T-cell (primary cell): ENCODE measurements at regions of chr3 and their contacts with region 1.

Region 1: GRCh38 chr3:71142440-71143161 is 440.9 kb downstream of the FOXP1 start:
- DNase-seq: peak in 2 of 35 experiments; percentile 15 to 25
- ATAC-seq: peak in 2 of 4 experiments; percentile 49 to 61
- H3K4me3 ChIP-seq: no peak overlapping the region
- H3K4me3 Mint-ChIP-seq: no peak overlapping the region
- H3K27ac ChIP-seq: peak overlapping the region; percentile 7
- H3K27ac Mint-ChIP-seq: peak overlapping the region; percentile 36 to 84
- H3K4me1 ChIP-seq: peaks cover 0 to 4% of the 10 kb centered on the region in 2 experiments
- H3K4me1 Mint-ChIP-seq: peaks cover 62 to 75% (median 71%) of the 10 kb centered on the region in 3 donors
- H3K27me3 ChIP-seq: no peaks in the 10 kb centered on the region
- H3K27me3 Mint-ChIP-seq: no peaks in the 10 kb centered on the region

Region 2: DNA sequence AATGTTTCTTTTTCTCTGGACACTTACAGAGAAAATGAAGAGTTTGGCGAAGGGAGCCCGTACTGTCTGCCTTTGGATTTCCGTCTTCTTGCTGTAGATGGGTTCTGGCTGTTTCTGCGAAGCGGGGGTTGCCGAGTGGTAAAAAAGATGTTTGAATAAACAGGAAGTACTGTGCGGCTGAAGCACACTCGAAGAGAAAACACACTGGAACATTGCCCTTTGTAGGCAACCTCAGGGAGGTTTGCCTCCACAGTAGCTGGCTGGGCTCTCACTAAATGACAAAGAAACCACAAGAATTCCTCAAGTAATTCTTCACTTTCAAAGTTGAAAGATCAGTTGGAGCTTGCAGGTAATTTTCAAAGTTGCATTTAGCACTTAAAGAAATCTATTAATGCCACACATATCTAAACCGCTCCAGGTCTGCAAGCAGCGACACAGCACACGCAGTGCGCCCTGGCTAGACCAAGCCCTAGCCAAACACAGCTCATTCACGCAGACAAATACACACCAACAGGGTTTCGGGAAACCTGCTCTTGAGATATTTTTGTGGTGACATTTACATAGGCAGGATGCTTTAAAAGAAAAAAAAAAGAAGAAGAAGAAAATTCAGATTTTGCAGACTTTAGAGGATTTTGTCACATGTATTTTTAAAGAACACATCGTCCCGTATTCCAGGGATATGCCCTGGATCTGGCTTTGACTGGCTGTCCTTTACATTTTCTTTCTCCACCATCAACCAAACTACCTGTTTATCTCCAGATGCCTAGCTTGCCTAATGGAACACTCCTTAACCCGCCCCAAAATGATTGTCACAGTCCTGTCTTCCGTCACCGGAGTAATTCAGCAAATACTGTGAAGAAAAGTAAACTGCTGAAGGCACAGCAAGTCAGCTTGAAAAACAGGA is 11.9 kb before region 1 on chr3:
- CTCF ChIA-PET with region 1: interaction called in 1 of 2 experiments, 10 read pairs
- POLR2A ChIA-PET with region 1: interaction called in 1 of 2 experiments, 3 read pairs
- DNase-seq: peak; percentile 42 to 89 (median 79)
- ATAC-seq: peak; percentile 82 to 89 (median 85)
- H3K4me3 ChIP-seq: peak overlapping the region; percentile 56 to 73
- H3K4me3 Mint-ChIP-seq: peak overlapping the region; percentile 83 to 91 (median 91)
- H3K27ac ChIP-seq: peak overlapping the region; percentile 86
- H3K27ac Mint-ChIP-seq: peak overlapping the region; percentile 97 to 99
- H3K4me1 ChIP-seq: peaks cover 50 to 63% of the 10 kb centered on the region in 2 experiments
- H3K4me1 Mint-ChIP-seq: peaks cover 79 to 93% (median 80%) of the 10 kb centered on the region in 3 donors
- H3K27me3 ChIP-seq: no peaks in the 10 kb centered on the region
- H3K27me3 Mint-ChIP-seq: no peaks in the 10 kb centered on the region

Region 3: DNA sequence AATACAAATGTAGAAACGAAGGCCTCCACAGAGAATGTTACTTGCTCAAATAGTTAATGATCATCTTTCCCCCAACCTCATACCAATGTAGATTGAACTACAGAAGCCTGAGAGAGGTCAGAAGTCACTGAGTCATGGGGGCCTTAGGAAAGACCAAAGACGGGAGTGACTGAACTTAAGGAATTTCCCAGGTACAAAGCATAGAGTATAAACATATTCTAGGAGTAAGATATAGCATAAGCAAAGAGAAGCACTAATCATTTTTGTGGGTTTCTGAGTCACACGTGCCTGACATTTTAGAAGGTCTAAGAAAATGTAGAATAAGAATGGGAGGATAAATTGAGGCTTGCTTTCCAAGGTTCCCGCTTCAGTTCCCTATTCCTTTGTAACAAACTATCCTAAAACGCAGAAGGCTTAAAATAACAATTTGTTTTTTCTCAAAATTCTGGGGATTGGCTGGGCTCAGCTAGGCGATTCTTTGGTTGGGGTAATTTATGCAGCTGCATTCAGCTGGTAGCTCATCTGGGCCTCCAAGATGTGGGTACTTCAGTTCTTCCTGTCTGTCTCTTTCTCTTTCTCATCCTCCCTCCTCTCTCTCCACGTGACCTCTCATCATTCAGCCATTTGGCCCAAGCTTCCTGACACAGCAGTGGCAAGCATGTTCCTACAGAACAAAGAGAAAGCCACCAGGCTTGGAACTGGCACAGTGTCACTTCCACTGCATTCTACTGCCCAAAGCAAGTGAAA is 18.4 kb after region 1 on chr3:
- CTCF ChIA-PET with region 1: no interaction called
- POLR2A ChIA-PET with region 1: interaction called in 1 of 2 experiments, 11 read pairs
- DNase-seq: no peak
- ATAC-seq: peak in 1 of 4 experiments; percentile 45
- H3K4me3 ChIP-seq: no peak overlapping the region
- H3K4me3 Mint-ChIP-seq: no peak overlapping the region
- H3K27ac ChIP-seq: no peak overlapping the region
- H3K27ac Mint-ChIP-seq: peak overlapping the region; percentile 33 to 59
- H3K4me1 ChIP-seq: peaks cover 0 to 4% of the 10 kb centered on the region in 2 experiments
- H3K4me1 Mint-ChIP-seq: peaks cover 71 to 83% (median 79%) of the 10 kb centered on the region in 3 donors
- H3K27me3 ChIP-seq: no peaks in the 10 kb centered on the region
- H3K27me3 Mint-ChIP-seq: no peaks in the 10 kb centered on the region

Region 4: GRCh38 chr3:71322154-71322553 is 179.6 kb after region 1 on chr3:
- CTCF ChIA-PET with region 1: no interaction called
- POLR2A ChIA-PET with region 1: no interaction called
- DNase-seq: no peak
- ATAC-seq: no peak
- H3K4me3 ChIP-seq: no peak overlapping the region
- H3K4me3 Mint-ChIP-seq: no peak overlapping the region
- H3K27ac ChIP-seq: no peak overlapping the region
- H3K27ac Mint-ChIP-seq: no peak overlapping the region
- H3K4me1 ChIP-seq: peaks cover 3 to 10% of the 10 kb centered on the region in 2 experiments
- H3K4me1 Mint-ChIP-seq: peaks cover 24 to 36% (median 29%) of the 10 kb centered on the region in 3 donors
- H3K27me3 ChIP-seq: no peaks in the 10 kb centered on the region
- H3K27me3 Mint-ChIP-seq: no peaks in the 10 kb centered on the region

Region 5: DNA sequence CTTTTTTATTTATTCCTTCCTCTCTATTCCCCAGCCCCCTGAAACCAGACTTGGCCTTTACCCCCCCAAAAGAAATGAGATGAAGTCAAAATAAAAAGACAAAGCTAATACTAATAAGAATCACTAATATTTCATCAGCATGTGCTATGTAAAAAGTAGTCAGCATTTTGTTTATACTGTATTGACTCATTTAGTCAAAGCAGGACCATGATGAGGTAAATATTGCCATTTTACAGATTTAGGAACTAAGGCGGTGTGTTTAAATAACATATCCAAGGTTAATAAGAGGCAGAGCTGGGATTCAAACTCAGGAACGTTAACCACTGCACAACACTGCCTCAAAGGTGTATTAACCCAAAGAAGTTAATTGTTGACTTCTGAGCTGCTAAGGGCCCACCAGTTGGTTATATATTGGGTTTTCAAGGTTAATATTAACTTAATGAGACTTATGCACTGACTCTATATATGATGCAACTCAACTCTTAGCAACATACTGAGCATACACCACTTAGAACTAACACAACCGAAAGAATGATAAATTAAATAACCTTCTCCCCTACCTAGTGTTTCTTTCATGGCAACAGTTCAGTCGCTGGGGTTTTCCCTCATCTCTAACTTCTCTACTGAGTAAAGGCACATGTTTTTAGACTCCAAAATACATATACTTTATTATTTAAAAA is 406.2 kb after region 1 on chr3:
- CTCF ChIA-PET with region 1: no interaction called
- POLR2A ChIA-PET with region 1: interaction called in 1 of 2 experiments, 15 read pairs
- DNase-seq: no peak
- ATAC-seq: no peak
- H3K4me3 ChIP-seq: no peak overlapping the region
- H3K4me3 Mint-ChIP-seq: no peak overlapping the region
- H3K27ac ChIP-seq: no peak overlapping the region
- H3K27ac Mint-ChIP-seq: no peak overlapping the region
- H3K4me1 ChIP-seq: no peaks in the 10 kb centered on the region
- H3K4me1 Mint-ChIP-seq: no peaks in the 10 kb centered on the region
- H3K27me3 ChIP-seq: no peaks in the 10 kb centered on the region
- H3K27me3 Mint-ChIP-seq: no peaks in the 10 kb centered on the region